ENCODE measurements at regions of chr12 and their contacts with region 1.

Region 1: DNA sequence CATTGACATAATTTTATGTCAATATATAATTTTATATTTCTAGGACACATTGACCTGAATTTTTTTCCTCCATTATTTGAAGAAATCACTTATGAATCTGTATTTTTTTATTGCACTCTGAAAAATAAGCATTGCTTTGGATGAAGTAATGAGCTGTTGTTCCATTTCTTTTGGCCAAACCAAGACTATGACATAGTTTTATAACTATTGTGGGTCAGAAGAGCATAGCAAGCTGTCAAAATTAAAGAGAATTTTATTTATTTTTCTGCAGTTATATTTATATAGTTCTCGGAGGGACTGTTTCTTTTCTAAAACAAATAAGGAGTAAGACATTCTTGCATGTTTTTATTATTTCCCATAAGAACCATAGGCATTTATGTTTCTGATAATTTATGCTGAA is 8.5 kb downstream of the C12orf75 start:
- DNase-seq: no peak
- ATAC-seq: no peak
- H3K4me3 Mint-ChIP-seq: no peak overlapping the region
- H3K27ac Mint-ChIP-seq: no peak overlapping the region
- H3K4me1 Mint-ChIP-seq: peaks cover 15% of the 10 kb centered on the region
- H3K27me3 Mint-ChIP-seq: no peaks in the 10 kb centered on the region

Region 2: DNA sequence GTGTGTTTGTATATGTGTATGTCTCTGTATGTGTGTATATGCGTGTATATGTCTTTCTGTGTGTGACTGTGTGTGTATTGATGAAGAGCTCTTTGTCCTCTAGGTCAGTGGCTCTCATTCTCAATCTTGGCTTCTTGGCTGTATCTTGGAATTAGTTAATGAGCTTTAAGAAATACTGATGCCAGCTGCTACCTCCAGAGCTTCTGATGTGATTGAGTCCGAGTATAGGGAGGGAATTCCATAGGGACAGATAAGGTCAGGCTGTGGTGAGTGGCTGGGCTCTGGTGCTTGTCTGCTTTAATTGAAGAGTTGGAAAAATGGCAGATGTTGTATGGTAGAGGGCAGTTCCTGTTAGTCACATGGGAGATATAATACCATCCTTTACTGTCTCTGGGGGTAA is 131.6 kb after region 1 on chr12:
- CTCF ChIA-PET with region 1: no interaction called
- POLR2A ChIA-PET with region 1: interaction called, 11 read pairs
- intact Hi-C with region 1: no loop called
- DNase-seq: no peak
- ATAC-seq: no peak
- H3K4me3 Mint-ChIP-seq: no peak overlapping the region
- H3K27ac Mint-ChIP-seq: no peak overlapping the region
- H3K4me1 Mint-ChIP-seq: no peaks in the 10 kb centered on the region
- H3K27me3 Mint-ChIP-seq: peaks cover 14% of the 10 kb centered on the region

Measured in activated CD4-positive, alpha-beta T cell treated with anti-CD3 and anti-CD28 coated beads for 36 hours (primary cell).